Endothelial cell of umbilical vein (primary cell): ENCODE measurements at regions of chr1 and their contacts with region 1.

Region 1: GRCh38 chr1:172870901-172871606 is 179.7 kb downstream of the TNFSF18 start:
- DNase-seq: no peak
- H3K4me3 ChIP-seq: no peak overlapping the region
- H3K27ac ChIP-seq: no peak overlapping the region
- H3K4me1 ChIP-seq: peaks cover 10% of the 10 kb centered on the region
- H3K27me3 ChIP-seq: no peaks in the 10 kb centered on the region
- CTCF ChIP-seq: no peak
- POLR2A ChIP-seq: no peak

Region 2: DNA sequence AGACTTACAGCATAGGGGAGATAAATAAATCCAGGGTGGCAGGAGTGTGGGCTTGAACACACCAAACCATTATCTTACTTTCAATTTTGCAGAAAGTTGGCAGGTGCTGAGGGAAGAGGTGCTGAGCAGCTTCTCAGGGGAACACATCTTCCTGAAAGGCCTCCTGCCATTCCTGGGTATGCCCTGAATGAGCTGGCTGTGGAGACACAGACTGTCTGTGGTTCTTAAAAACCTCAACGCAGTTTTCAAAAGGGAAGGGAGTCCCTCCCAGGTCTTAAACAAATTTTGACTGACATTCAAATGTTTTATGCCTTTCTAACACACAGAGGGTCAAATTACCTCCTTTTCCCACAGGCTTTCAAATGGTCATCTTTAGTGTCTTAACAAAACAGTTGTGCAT is 12.8 kb after region 1 on chr1:
- CTCF ChIA-PET with region 1: no interaction called
- POLR2A ChIA-PET with region 1: no interaction called
- dilution Hi-C with region 1: no loop called
- intact Hi-C with region 1: loop called (anchors 2 kb)
- DNase-seq: no peak
- H3K4me3 ChIP-seq: no peak overlapping the region
- H3K27ac ChIP-seq: peak overlapping the region; percentile 73
- H3K4me1 ChIP-seq: peaks cover 43% of the 10 kb centered on the region
- H3K27me3 ChIP-seq: no peaks in the 10 kb centered on the region
- CTCF ChIP-seq: no peak
- POLR2A ChIP-seq: no peak

Region 3: DNA sequence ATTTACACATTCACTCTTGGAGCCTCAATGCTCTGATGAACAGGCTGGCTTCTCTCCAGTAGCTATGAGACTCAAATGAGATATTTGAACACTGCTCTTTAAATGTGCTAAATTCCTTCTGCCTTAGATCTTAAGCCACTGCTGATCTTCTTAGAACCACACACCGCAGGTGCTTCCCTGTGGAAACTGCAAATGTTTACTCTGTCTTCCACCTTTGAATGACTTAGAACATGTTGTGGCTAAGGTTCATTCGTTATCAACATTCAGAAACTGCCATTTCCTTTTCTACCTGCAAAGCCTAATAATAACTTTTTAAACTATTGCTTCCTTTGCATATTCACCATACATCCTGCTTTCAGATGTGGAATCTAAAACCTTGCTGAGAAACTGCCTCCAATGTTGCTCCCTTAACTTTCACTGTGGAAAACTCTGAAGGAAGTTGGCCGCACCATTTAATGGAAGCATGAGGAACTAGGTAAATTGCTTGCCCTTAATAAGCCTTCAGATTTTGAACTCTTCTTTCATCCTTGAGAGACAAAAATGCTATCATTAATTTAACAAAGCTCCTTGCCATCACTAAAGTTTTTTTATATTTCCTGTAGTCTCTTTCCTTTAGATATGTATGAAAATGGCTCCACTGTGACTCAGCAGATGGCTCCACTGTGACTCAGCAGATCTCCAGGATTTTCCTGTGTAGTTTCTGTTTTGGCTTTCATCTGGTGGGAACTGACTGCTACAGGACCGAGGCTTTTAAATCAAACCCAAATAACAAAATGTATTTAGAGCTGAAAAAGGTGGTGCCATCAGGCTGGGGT is 35.9 kb after region 1 on chr1:
- CTCF ChIA-PET with region 1: no interaction called
- POLR2A ChIA-PET with region 1: no interaction called
- dilution Hi-C with region 1: no loop called
- intact Hi-C with region 1: no loop called
- DNase-seq: peak; percentile 96
- H3K4me3 ChIP-seq: no peak overlapping the region
- H3K27ac ChIP-seq: peak overlapping the region; percentile 88
- H3K4me1 ChIP-seq: peaks cover 84% of the 10 kb centered on the region
- H3K27me3 ChIP-seq: no peaks in the 10 kb centered on the region
- CTCF ChIP-seq: no peak
- POLR2A ChIP-seq: peak; percentile 58

Region 4: DNA sequence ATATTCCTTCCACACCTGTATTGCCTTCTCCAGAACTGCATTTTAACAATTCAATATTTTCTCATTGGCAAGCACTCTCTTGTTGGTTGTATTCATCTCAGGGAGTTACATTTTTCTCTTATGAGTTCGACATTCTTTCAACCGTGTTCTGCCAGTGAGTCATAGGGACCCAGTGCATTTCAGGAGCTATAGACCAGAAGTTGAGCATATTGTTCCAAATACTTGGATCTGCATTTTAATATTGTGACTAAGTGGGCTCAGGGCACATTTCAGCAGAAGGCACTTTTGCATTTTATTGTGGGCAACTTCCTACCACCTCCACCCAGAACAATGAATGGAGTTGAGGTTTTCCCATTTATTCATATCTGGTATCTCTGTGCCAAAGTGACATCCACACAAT is 46.9 kb after region 1 on chr1:
- CTCF ChIA-PET with region 1: no interaction called
- POLR2A ChIA-PET with region 1: no interaction called
- dilution Hi-C with region 1: no loop called
- intact Hi-C with region 1: no loop called
- DNase-seq: peak; percentile 96
- H3K4me3 ChIP-seq: no peak overlapping the region
- H3K27ac ChIP-seq: peak overlapping the region; percentile 84
- H3K4me1 ChIP-seq: peaks cover 62% of the 10 kb centered on the region
- H3K27me3 ChIP-seq: no peaks in the 10 kb centered on the region
- CTCF ChIP-seq: no peak
- POLR2A ChIP-seq: peak; percentile 68